GM10248 (cell line): ENCODE measurements at regions of chr21 and their contacts with region 1.

Region 1: DNA sequence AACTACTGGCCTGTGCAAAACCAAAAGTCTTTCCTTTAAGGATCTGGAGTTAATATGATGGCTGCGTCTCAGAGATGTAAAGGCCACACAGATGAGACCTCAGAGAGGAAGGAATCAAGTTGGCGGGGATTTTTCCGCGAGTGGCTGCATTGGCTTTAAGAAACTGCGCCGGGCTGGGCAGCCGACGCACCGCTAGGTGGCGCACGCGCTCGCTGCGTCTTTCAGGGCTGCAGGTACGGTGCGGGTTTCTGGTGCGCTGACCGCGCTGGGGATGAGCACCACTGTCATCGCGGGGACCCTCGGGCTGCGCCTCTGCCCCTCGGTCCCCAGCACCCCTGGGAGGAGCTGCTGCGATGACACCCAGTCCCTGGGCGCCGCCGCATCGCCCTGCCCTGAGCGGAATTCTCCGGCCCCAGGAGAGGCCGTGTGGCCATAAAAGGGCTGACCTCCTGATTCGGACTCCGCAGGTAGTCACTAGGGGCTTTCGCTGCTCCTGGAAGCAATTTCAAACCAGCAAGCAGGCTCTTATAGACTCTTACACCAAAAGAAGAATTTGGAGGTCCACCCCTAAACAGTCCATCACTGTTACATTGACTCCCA is 241.0 kb downstream of the KCNJ6 start:
- DNase-seq: peak; percentile 76
- CTCF ChIP-seq: peak; percentile 98

Region 2: DNA sequence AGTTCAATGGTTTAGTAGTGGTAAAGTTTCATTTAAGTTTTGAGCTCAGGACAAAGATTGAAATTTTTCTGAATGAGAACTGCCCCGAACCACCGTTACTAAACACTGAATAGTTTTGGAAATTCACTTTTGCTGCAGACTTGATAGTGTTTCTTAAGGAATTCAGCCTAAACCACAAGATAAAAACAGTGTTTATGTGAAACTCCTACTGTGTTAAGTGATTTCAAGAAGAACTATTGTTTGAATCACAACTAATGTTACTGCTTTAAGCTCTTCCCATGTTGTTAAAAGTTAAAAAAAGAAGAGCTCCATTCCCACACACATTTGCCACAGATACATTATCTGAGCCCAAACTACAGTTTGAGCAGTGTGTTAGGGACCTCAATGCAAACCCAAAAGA is 149.5 kb before region 1 on chr21:
- CTCF ChIA-PET with region 1: no interaction called
- POLR2A ChIA-PET with region 1: no interaction called
- DNase-seq: no peak
- CTCF ChIP-seq: no peak

Region 3: DNA sequence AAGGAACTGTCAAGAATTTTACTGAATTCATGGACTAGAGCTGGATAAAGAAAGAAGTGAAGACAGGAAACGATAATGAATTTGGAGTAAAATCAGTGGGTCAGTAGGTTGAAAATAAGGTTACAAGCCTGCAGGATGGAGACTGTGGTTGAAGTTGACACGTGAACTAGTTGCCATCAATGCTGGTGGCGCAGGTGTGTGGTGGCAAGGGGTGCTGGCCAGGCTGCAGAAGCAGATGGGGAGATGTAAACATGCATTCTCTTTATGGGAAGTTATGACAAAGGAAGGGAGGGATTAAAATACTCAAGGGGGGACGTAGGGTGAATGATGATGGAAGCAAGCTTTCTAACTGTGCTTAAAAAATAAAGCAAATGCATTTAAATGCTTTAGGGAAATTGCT is 22.1 kb before region 1 on chr21:
- CTCF ChIA-PET with region 1: interaction called, 13 read pairs
- POLR2A ChIA-PET with region 1: no interaction called
- DNase-seq: no peak
- CTCF ChIP-seq: no peak

Region 4: GRCh38 chr21:37658817-37659458 is 16.4 kb before region 1 on chr21:
- CTCF ChIA-PET with region 1: interaction called, 13 read pairs
- POLR2A ChIA-PET with region 1: no interaction called
- DNase-seq: no peak
- CTCF ChIP-seq: no peak

Region 5: DNA sequence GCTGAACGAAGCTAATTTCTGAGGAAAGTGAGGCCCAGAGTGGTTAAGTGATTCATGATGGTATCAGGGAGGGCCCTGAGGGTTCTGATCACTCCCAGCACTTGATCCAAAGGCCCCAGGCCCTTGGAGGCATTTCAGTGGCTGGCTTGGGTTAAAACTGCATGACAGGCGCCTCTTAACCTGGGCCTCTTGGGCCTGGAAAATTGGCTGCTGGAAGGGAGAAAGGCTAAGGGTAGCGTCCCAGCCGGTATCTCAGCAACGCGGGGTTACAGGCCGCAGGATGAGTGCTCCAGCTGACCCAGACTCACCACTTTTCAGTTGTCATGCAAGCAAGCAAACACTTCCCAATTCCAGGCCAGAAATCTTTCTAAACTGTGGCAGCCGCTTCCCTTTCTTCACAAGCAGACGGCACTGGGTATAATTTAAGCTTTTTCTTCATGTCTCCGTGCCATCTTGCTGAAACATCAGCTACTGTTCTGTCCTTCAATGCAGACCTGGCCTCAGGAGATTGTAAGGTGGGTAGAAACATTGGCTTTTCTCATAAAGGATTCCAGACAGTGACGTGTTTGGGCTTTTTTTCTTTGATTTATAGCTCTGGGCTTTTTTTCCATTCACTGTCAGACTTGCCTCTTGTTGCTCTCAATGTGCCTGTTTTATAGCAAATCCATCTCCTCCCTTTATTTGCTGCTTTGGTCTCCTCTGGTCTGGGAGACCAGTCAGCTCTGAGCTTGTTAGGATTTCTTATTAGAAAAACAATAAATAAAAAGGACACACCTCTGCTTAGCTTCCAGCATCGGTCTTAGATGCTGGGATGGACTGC is 11.9 kb after region 1 on chr21:
- CTCF ChIA-PET with region 1: interaction called, 18 read pairs
- POLR2A ChIA-PET with region 1: no interaction called
- DNase-seq: no peak
- CTCF ChIP-seq: no peak